ENCODE measurements at regions of chr1 and their contacts with region 1.

Region 1: DNA sequence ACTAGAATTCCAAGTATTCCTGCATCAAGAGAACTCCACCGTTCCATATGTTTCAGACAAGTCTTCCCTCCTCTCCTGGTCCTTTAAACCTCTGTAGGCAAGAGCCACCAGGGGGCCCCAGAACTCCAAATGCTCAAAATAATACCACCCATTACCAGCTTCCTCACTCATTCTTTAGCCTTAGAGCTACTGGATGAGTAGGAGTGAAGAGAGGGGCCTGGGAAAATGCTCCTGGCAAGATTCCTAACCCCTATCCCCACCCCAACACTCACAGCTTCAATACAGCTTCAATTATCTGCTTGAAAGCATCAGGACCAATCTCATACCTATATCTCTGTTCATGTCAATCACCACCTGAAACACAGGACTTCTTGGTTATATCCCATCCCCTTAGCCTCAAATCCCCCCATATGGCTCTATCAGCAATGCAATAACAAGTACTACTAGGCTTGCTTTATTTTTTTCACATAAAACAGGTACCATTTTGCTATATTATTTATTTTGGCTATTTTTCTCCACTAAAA is 9.7 kb downstream of the TOR1AIP2 start:
- DNase-seq: peak; percentile 58
- ATAC-seq: peak; percentile 96
- H3K4me3 ChIP-seq: no peak overlapping the region
- H3K27ac ChIP-seq: no peak overlapping the region
- H3K4me1 ChIP-seq: peaks cover 27% of the 10 kb centered on the region
- H3K27me3 ChIP-seq: no peaks in the 10 kb centered on the region
- CTCF ChIP-seq: peak; percentile 71
- EP300 ChIP-seq: no peak
- POLR2A ChIP-seq: no peak
- RAD21 ChIP-seq: peak; percentile 54

Region 2: DNA sequence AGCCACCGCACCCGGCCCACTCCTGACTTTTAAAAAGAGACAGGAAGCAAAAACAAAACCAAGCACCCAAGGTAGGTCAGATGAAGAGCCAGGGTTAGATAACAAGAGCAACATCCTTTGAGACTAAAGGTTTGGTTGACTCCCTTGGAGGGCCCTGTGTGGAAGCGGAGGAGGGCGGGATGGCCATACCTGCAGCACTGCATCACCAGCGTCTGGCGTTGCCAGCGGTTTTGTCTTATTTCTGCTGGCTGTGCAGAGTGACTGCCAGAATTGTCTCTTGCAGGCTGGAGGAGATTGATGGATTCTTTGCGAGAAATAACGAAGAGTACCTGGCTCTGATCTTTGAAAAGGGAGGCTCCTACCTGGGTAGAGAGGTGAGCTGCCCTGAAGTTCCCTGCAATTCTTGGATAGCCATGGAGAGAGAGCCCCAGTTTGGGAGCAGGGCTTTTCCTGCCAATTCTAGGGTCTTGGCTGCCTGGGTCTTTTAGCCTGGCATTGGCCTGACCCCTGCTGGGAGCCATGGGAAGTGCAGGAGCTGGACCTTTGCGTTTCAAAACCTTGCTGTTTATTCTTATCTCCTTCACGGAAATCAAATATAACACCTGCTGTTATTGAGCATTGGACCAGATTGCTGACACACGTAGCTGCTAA is 310.8 kb after region 1 on chr1:
- CTCF ChIA-PET with region 1: interaction called, 4 read pairs
- POLR2A ChIA-PET with region 1: no interaction called
- in situ Hi-C with region 1: no loop called
- intact Hi-C with region 1: loop called (anchors 1 kb)
- DNase-seq: peak; percentile 25
- ATAC-seq: peak; percentile 63
- H3K4me3 ChIP-seq: no peak overlapping the region
- H3K27ac ChIP-seq: no peak overlapping the region
- H3K4me1 ChIP-seq: no peaks in the 10 kb centered on the region
- H3K27me3 ChIP-seq: no peaks in the 10 kb centered on the region
- CTCF ChIP-seq: peak; percentile 89
- EP300 ChIP-seq: no peak
- POLR2A ChIP-seq: no peak
- RAD21 ChIP-seq: peak; percentile 80

Measured in HepG2 (cell line).